ENCODE measurements at regions of chr2 and their contacts with region 1.

Region 1: GRCh38 chr2:118088051-118089024 is at the start of gene INSIG2:
- DNase-seq: peak; percentile 97
- total RNA-seq, gene INSIG2: 14.0 TPM

Region 2: DNA sequence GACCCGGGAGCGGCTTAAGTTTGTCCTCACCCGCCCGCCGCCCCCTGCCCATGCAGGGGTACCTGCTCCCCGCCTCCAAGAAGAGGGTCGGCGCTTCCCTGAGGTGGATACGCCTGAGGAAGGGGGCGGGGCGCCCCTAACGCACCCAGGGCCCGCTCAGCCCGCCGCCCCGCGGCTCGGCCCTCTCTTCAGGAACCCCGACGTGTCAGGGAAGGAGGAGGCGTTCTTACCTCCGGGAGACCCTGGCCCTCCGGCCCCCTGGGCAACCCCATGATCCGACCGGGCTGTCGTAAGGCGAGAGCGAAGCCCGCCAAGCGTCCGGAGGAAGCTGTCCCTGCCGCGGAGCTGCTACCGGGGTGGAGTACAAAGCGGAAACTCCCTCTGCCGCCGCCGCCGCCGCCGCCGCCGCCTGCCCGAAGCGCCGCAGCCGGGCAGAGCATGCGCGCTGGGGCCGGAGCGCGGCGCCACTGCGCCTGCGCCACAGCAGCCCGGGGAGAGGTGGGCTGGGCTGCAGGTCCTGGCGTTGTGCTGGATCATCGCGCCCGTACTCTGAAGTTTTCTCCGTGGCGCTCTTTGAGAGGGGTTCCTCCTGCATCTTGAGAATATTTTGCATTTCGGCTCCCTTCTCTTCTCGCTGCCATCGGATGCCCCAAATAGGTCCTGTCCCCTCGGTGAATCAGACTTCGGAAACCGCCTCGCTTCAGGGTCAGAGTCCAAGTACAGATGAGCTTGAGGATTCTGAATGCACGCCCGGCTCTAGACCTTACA is 74.4 kb before region 1 on chr2 and contains the start of gene CCDC93:
- intact Hi-C with region 1: loop called (anchors 5 kb)
- DNase-seq: peak; percentile 92
- total RNA-seq, gene CCDC93: 26.9 TPM